Activated CD4-positive, alpha-beta T cell treated with anti-CD3 and anti-CD28 coated beads for 36 hours (primary cell): ENCODE measurements at regions of chr10 and their contacts with region 1.

Region 1: DNA sequence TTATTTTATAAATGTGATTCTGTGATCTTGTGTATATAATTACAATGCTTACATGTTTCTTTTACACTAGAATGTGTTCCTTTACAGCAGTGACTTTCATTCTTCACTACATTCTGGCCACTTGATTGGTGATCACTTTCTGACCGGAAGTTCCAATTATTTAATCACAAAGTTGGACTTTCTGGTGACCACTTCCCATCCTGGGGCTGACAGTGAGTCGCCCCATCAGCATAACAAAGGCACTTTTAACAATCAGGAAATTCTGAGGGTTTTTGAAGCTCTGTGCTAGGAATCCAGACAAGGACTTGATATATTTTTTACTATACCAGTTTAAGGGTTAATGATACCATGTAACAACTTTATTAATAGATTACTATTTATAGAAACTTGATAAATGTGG is 282.3 kb upstream of the KAT6B start:
- DNase-seq: no peak
- ATAC-seq: no peak
- H3K4me3 Mint-ChIP-seq: no peak overlapping the region
- H3K27ac Mint-ChIP-seq: no peak overlapping the region
- H3K4me1 Mint-ChIP-seq: no peaks in the 10 kb centered on the region
- H3K27me3 Mint-ChIP-seq: no peaks in the 10 kb centered on the region

Region 2: GRCh38 chr10:74052994-74053393 is 491.1 kb before region 1 on chr10:
- CTCF ChIA-PET with region 1: no interaction called
- POLR2A ChIA-PET with region 1: interaction called, 10 read pairs
- intact Hi-C with region 1: no loop called
- DNase-seq: no peak
- ATAC-seq: no peak
- H3K4me3 Mint-ChIP-seq: no peak overlapping the region
- H3K27ac Mint-ChIP-seq: no peak overlapping the region
- H3K4me1 Mint-ChIP-seq: peaks cover 32% of the 10 kb centered on the region
- H3K27me3 Mint-ChIP-seq: no peaks in the 10 kb centered on the region

Region 3: DNA sequence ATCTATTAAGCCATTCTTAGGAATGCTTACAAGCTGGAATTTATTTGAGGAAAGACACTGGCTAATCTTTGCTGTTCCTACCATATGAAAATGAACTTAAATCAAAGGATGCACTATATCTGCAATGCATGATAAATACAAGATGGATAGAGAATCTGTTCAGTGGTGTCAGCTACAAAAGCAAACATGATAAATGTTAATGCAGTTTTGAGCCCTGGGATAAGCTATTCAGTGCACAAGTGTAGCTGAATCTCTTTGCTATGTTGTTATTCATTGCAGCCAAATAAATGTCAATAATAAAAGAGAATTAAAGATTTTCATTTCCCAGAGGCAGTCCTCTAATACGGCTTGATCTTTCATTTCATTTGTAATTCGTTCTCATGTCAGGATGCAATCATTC is 58.5 kb after region 1 on chr10:
- CTCF ChIA-PET with region 1: no interaction called
- POLR2A ChIA-PET with region 1: no interaction called
- intact Hi-C with region 1: no loop called
- DNase-seq: no peak
- ATAC-seq: no peak
- H3K4me3 Mint-ChIP-seq: no peak overlapping the region
- H3K27ac Mint-ChIP-seq: no peak overlapping the region
- H3K4me1 Mint-ChIP-seq: peaks cover 9% of the 10 kb centered on the region
- H3K27me3 Mint-ChIP-seq: no peaks in the 10 kb centered on the region